CD8-positive, alpha-beta T cell (primary cell): ENCODE measurements at regions of chr2 and their contacts with region 1.

Region 1: GRCh38 chr2:82411071-82411470 is 2048.0 kb downstream of the SUCLG1 start:
- DNase-seq: no peak
- ATAC-seq: no peak
- H3K4me3 ChIP-seq: no peak overlapping the region
- H3K4me3 Mint-ChIP-seq: no peak overlapping the region
- H3K27ac ChIP-seq: no peak overlapping the region
- H3K27ac Mint-ChIP-seq: no peak overlapping the region
- H3K4me1 ChIP-seq: no peaks in the 10 kb centered on the region
- H3K4me1 Mint-ChIP-seq: no peaks in the 10 kb centered on the region
- H3K27me3 ChIP-seq: no peaks in the 10 kb centered on the region
- H3K27me3 Mint-ChIP-seq: no peaks in the 10 kb centered on the region
- CTCF ChIP-seq: no peak

Region 2: DNA sequence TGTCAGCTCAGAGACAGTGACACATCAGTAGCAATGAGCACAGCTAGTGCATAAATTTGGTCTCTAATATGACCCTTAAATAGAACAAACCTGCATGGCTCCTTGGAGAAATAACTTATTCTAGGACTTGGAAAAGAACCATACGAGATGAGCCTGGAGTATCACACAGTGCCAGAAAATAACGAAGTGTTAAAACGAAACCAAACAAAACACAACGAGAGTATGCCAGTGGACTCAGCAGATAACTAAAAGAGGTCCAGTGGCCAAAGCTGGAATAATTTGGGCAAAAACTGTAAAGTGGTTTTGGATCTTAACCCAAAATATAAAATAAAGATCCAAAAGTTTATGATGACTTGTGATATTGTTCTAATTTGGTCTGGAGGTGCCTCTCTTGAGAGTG is 507.5 kb before region 1 on chr2:
- CTCF ChIA-PET with region 1: no interaction called
- POLR2A ChIA-PET with region 1: no interaction called
- intact Hi-C with region 1: no loop called
- DNase-seq: no peak
- ATAC-seq: no peak
- H3K4me3 ChIP-seq: no peak overlapping the region
- H3K4me3 Mint-ChIP-seq: no peak overlapping the region
- H3K27ac ChIP-seq: no peak overlapping the region
- H3K27ac Mint-ChIP-seq: no peak overlapping the region
- H3K4me1 ChIP-seq: no peaks in the 10 kb centered on the region
- H3K4me1 Mint-ChIP-seq: no peaks in the 10 kb centered on the region
- H3K27me3 ChIP-seq: no peaks in the 10 kb centered on the region
- H3K27me3 Mint-ChIP-seq: no peaks in the 10 kb centered on the region
- CTCF ChIP-seq: no peak

Region 3: GRCh38 chr2:82344670-82345069 is 66.4 kb before region 1 on chr2:
- CTCF ChIA-PET with region 1: no interaction called
- POLR2A ChIA-PET with region 1: no interaction called
- intact Hi-C with region 1: no loop called
- DNase-seq: no peak
- ATAC-seq: no peak
- H3K4me3 ChIP-seq: no peak overlapping the region
- H3K4me3 Mint-ChIP-seq: no peak overlapping the region
- H3K27ac ChIP-seq: no peak overlapping the region
- H3K27ac Mint-ChIP-seq: no peak overlapping the region
- H3K4me1 ChIP-seq: no peaks in the 10 kb centered on the region
- H3K4me1 Mint-ChIP-seq: no peaks in the 10 kb centered on the region
- H3K27me3 ChIP-seq: no peaks in the 10 kb centered on the region
- H3K27me3 Mint-ChIP-seq: no peaks in the 10 kb centered on the region
- CTCF ChIP-seq: no peak

Region 4: DNA sequence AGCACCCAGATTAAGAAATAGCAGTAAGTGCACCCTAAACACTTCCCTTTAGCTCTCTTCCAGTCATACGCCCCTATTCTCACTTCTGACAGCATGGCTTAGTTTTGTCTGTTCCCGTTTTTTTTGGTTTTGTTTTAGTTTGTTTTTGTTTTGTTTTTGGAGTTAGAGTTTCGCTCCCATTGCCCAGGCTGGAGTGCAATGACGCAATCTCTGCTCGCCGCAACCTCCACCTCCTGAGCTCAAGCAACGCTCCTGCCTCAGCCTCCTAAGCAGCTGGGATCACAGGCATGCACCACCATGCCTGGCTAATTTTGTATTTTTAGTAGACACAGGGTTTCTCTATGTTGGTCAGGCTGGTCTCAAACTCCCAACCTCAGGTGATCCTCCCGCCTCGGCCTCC is 19.7 kb before region 1 on chr2:
- CTCF ChIA-PET with region 1: no interaction called
- POLR2A ChIA-PET with region 1: no interaction called
- intact Hi-C with region 1: no loop called
- DNase-seq: no peak
- ATAC-seq: no peak
- H3K4me3 ChIP-seq: no peak overlapping the region
- H3K4me3 Mint-ChIP-seq: no peak overlapping the region
- H3K27ac ChIP-seq: no peak overlapping the region
- H3K27ac Mint-ChIP-seq: no peak overlapping the region
- H3K4me1 ChIP-seq: no peaks in the 10 kb centered on the region
- H3K4me1 Mint-ChIP-seq: no peaks in the 10 kb centered on the region
- H3K27me3 ChIP-seq: no peaks in the 10 kb centered on the region
- H3K27me3 Mint-ChIP-seq: no peaks in the 10 kb centered on the region
- CTCF ChIP-seq: no peak

Region 5: DNA sequence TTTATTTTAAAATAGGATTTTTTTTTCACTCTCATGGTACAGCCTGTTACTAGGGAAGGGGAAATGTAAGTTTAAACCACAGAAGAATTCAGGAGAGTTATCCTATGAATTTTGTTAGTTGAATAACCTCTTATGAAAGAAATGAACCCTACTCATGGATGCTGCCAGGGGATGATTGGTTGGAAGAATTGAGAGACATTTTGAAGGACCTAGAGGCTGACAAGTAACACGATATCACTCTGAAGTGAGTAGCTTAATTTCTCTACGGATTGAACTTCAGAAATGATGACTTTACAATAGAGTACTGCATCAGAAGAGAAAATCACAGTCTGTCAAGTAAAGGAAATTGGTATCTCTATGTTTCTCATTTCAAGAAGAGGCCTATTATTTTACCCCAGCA is 701.8 kb after region 1 on chr2:
- CTCF ChIA-PET with region 1: no interaction called
- POLR2A ChIA-PET with region 1: no interaction called
- intact Hi-C with region 1: loop called in 1 of 2 experiments (anchors 10 kb)
- DNase-seq: no peak
- ATAC-seq: no peak
- H3K4me3 ChIP-seq: no peak overlapping the region
- H3K4me3 Mint-ChIP-seq: no peak overlapping the region
- H3K27ac ChIP-seq: no peak overlapping the region
- H3K27ac Mint-ChIP-seq: no peak overlapping the region
- H3K4me1 ChIP-seq: no peaks in the 10 kb centered on the region
- H3K4me1 Mint-ChIP-seq: no peaks in the 10 kb centered on the region
- H3K27me3 ChIP-seq: no peaks in the 10 kb centered on the region
- H3K27me3 Mint-ChIP-seq: no peaks in the 10 kb centered on the region
- CTCF ChIP-seq: no peak